Naive thymus-derived CD4-positive, alpha-beta T cell (primary cell): ENCODE measurements at regions of chr1 and their contacts with region 1.

Region 1: GRCh38 chr1:77378723-77379535 is 97.1 kb downstream of the AK5 start:
- DNase-seq: peak in 3 of 9 donors; percentile 3 to 18 (median 9)
- ATAC-seq: peak; percentile 31
- H3K4me3 ChIP-seq: no peak overlapping the region
- H3K4me3 Mint-ChIP-seq: peak overlapping the region in 4 of 10 donors; percentile 10 to 43 (median 14)
- H3K27ac ChIP-seq: no peak overlapping the region
- H3K27ac Mint-ChIP-seq: peak overlapping the region in 7 of 9 donors; percentile 7 to 83 (median 62)
- H3K4me1 ChIP-seq: peaks cover 0 to 8% of the 10 kb centered on the region in 2 donors
- H3K4me1 Mint-ChIP-seq: peaks cover 0 to 65% (median 32%) of the 10 kb centered on the region in 7 donors
- H3K27me3 ChIP-seq: no peaks in the 10 kb centered on the region
- H3K27me3 Mint-ChIP-seq: no peaks in the 10 kb centered on the region

Region 2: GRCh38 chr1:77068013-77068412 is 310.9 kb before region 1 on chr1:
- CTCF ChIA-PET with region 1: no interaction called
- POLR2A ChIA-PET with region 1: no interaction called
- intact Hi-C with region 1: no loop called
- DNase-seq: no peak
- ATAC-seq: no peak
- H3K4me3 ChIP-seq: no peak overlapping the region
- H3K4me3 Mint-ChIP-seq: no peak overlapping the region
- H3K27ac ChIP-seq: no peak overlapping the region
- H3K27ac Mint-ChIP-seq: no peak overlapping the region
- H3K4me1 ChIP-seq: no peaks in the 10 kb centered on the region
- H3K4me1 Mint-ChIP-seq: no peaks in the 10 kb centered on the region
- H3K27me3 ChIP-seq: no peaks in the 10 kb centered on the region
- H3K27me3 Mint-ChIP-seq: peaks cover 0 to 12% (median 0%) of the 10 kb centered on the region in 5 donors

Region 3: GRCh38 chr1:77355010-77355409 is 23.9 kb before region 1 on chr1:
- CTCF ChIA-PET with region 1: no interaction called
- POLR2A ChIA-PET with region 1: no interaction called
- intact Hi-C with region 1: loop called in 1 of 2 experiments (anchors 2 kb)
- DNase-seq: no peak
- ATAC-seq: no peak
- H3K4me3 ChIP-seq: no peak overlapping the region
- H3K4me3 Mint-ChIP-seq: no peak overlapping the region
- H3K27ac ChIP-seq: no peak overlapping the region
- H3K27ac Mint-ChIP-seq: peak overlapping the region in 1 of 9 donors; percentile 32
- H3K4me1 ChIP-seq: no peaks in the 10 kb centered on the region
- H3K4me1 Mint-ChIP-seq: peaks cover 4 to 51% (median 27%) of the 10 kb centered on the region in 7 donors
- H3K27me3 ChIP-seq: no peaks in the 10 kb centered on the region
- H3K27me3 Mint-ChIP-seq: no peaks in the 10 kb centered on the region